CD14-positive monocyte (primary cell): ENCODE measurements at regions of chr1 and their contacts with region 1.

Region 1: DNA sequence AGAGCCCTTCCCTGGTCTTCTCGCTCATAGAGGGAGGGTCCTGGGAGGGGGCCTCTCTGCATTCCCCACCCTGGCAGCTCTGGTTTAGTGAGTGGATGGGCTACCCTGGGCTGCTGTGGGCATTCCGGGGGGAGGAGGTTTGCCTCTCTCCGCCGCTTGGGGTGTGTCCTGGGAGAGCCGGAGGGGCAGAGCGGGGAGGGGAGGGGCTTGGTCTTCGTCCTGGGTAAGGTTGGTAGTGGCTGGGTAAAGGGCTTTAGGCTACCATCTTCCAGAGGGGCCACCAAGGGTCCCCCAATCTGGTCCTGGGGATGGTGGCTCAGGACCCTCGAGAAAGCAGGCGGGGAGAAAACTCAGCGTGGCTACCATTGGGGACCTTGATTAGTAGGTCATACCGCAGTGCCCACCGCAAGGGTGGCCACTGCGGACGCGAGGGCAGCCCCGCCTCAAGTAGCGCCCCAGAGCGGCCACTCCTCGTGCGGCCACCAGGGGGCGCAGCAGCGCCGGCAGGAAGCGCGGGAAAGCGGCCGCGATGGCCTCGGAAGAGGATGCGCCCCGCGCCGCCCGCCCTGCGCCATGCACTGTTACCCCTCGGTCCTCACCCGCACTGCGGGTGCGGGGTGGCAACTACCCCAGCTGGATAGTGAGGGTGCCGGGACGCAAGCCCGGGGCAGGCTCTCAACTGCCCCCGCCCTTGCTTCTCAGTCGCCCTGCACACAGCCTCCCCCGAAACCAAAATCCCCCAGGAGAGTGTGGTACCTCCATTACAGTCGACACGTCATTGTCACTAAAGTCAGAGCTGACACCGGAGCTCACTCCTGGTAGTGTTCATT is 44.1 kb upstream of the SLC25A33 start:
- DNase-seq: peak; percentile 45 to 60 (median 49)
- H3K4me3 ChIP-seq: peak overlapping the region in 1 of 3 experiments; percentile 36
- H3K4me3 Mint-ChIP-seq: peak overlapping the region in 1 of 2 donors; percentile 57
- H3K27ac ChIP-seq: no peak overlapping the region
- H3K27ac Mint-ChIP-seq: no peak overlapping the region
- H3K4me1 ChIP-seq: peaks cover 9 to 10% of the 10 kb centered on the region in 2 donors
- H3K4me1 Mint-ChIP-seq: peaks cover 8% of the 10 kb centered on the region
- H3K27me3 ChIP-seq: peaks cover 0 to 10% of the 10 kb centered on the region in 2 donors
- H3K27me3 Mint-ChIP-seq: peaks cover 12 to 25% (median 18%) of the 10 kb centered on the region in 3 donors
- CTCF ChIP-seq: peak; percentile 99

Region 2: GRCh38 chr1:9110669-9111356 is 384.3 kb before region 1 on chr1:
- intact Hi-C with region 1: loop called in 1 of 2 experiments (anchors 5 kb)
- DNase-seq: peak; percentile 71 to 84 (median 72)
- H3K4me3 ChIP-seq: no peak overlapping the region
- H3K4me3 Mint-ChIP-seq: no peak overlapping the region
- H3K27ac ChIP-seq: no peak overlapping the region
- H3K27ac Mint-ChIP-seq: peak overlapping the region in 3 of 7 donors; percentile 23 to 59 (median 50)
- H3K4me1 ChIP-seq: no peaks in the 10 kb centered on the region
- H3K4me1 Mint-ChIP-seq: peaks cover 9% of the 10 kb centered on the region
- H3K27me3 ChIP-seq: no peaks in the 10 kb centered on the region
- H3K27me3 Mint-ChIP-seq: peaks cover 0 to 4% (median 0%) of the 10 kb centered on the region in 3 donors
- CTCF ChIP-seq: peak; percentile 95

Region 3: DNA sequence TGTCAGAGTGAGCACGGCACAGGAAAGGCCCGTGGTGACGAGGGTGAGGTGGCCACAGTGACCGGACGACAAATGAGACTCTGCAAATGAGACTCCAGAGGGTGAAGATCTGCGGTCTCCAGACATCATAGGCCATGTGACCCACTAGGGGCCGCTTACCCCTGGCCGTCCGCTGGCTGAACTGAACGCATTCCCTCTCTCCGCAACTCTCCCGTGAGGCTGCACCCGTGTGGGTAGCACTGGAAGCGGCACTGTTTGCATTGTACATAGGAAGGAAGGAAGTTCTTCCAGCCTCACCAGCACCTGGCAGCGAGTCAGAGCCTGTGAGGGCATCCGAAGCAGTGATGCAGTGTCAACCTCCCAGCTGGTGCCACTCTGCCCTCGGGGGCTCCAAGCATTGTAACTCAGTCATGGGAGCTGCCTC is 226.1 kb before region 1 on chr1:
- intact Hi-C with region 1: loop called (anchors 1 to 5 kb)
- DNase-seq: no peak
- H3K4me3 ChIP-seq: no peak overlapping the region
- H3K4me3 Mint-ChIP-seq: no peak overlapping the region
- H3K27ac ChIP-seq: no peak overlapping the region
- H3K27ac Mint-ChIP-seq: peak overlapping the region in 1 of 7 donors; percentile 36
- H3K4me1 ChIP-seq: no peaks in the 10 kb centered on the region
- H3K4me1 Mint-ChIP-seq: peaks cover 3% of the 10 kb centered on the region
- H3K27me3 ChIP-seq: no peaks in the 10 kb centered on the region
- H3K27me3 Mint-ChIP-seq: peaks cover 0 to 1% (median 1%) of the 10 kb centered on the region in 3 donors
- CTCF ChIP-seq: no peak

Region 4: GRCh38 chr1:9292361-9293240 is 202.5 kb before region 1 on chr1 and contains the start of gene SPSB1:
- intact Hi-C with region 1: loop called in 1 of 2 experiments (anchors 1 kb)
- DNase-seq: peak; percentile 52 to 62 (median 62)
- H3K4me3 ChIP-seq: peak within 1 kb of the TSS; percentile 45 to 75 (median 46)
- H3K4me3 Mint-ChIP-seq: peak within 1 kb of the TSS; percentile 64 to 73
- H3K27ac ChIP-seq: no peak within 1 kb of the TSS
- H3K27ac Mint-ChIP-seq: peak within 1 kb of the TSS in 2 of 7 donors; percentile 36 to 38
- H3K4me1 ChIP-seq: peaks cover 22 to 32% of the 10 kb centered on the region in 2 donors
- H3K4me1 Mint-ChIP-seq: peaks cover 20% of the 10 kb centered on the region
- H3K27me3 ChIP-seq: peaks cover 16 to 47% of the 10 kb centered on the region in 2 donors
- H3K27me3 Mint-ChIP-seq: peaks cover 19 to 32% (median 27%) of the 10 kb centered on the region in 3 donors
- CTCF ChIP-seq: no peak
- polyA plus RNA-seq, gene SPSB1: 0.15 to 1.2 (median 0.29) TPM

Region 5: DNA sequence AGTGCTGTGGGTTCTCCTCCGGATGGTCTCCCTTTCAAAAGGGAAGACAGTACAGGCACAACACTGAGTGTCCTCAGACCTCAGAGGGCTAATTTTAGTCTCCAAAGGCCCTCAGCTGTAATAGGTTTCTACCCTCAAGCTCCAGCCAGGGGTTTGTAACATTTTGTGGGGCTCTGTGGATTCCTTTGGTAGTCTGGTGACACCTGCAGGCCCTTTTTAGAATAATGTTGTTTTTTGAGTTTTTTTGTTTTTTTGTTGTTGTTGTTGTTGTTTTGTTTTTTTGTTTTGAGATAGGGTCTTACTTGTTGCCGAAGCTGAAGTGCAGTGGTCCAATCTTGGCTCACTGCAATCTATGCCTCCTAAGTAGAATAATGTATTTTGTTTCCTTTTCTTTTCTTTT is 78.6 kb after region 1 on chr1:
- intact Hi-C with region 1: loop called (anchors 1 to 2 kb)
- DNase-seq: no peak
- H3K4me3 ChIP-seq: no peak overlapping the region
- H3K4me3 Mint-ChIP-seq: no peak overlapping the region
- H3K27ac ChIP-seq: no peak overlapping the region
- H3K27ac Mint-ChIP-seq: peak overlapping the region in 1 of 7 donors; percentile 48
- H3K4me1 ChIP-seq: no peaks in the 10 kb centered on the region
- H3K4me1 Mint-ChIP-seq: peaks cover 5% of the 10 kb centered on the region
- H3K27me3 ChIP-seq: no peaks in the 10 kb centered on the region
- H3K27me3 Mint-ChIP-seq: peaks cover 0 to 2% (median 0%) of the 10 kb centered on the region in 3 donors
- CTCF ChIP-seq: peak; percentile 50

Region 6: DNA sequence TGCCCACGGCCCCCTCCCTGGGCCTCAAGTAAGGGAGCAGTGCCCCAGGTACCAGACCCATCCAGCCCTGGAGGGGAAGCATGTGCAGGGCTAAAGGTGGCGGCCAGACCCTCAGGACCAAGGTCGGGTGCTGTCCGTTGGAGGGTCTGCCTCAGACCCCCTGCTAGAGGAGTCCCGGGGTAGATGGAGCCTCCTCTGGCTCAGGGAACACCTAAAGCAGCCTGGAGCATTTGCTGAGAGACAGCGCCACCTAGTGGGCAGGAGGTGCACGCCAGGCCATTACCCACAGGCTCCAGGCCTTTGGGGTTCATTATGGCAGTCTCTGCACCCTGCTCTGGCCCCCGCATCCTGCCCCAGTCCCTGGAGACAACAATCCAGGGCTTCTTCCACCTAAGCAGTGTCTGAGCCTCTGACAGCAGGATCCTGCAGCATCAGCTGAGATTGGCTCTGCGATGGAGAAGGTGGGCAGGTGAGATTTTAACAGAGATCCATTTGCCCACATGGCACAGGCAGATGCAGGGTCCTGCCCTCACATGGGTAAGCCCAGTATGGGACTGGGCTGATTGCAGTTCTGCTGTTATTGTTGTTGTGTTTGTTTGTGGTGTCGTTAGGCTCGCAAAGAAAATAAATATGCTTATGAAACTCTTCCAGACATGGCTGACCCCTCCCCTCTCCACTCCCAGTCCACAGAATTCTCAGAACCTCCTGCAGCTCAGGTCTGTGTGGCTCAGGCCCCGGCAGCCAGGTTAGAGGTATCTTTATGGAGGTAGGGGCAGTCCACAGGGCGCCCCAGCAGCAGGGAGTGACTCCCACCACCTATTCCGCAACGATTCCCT is 372.5 kb after region 1 on chr1:
- intact Hi-C with region 1: loop called in 1 of 2 experiments (anchors 10 kb)
- DNase-seq: peak; percentile 61 to 74 (median 70)
- H3K4me3 ChIP-seq: no peak overlapping the region
- H3K4me3 Mint-ChIP-seq: no peak overlapping the region
- H3K27ac ChIP-seq: no peak overlapping the region
- H3K27ac Mint-ChIP-seq: peak overlapping the region in 2 of 7 donors; percentile 20 to 63
- H3K4me1 ChIP-seq: no peaks in the 10 kb centered on the region
- H3K4me1 Mint-ChIP-seq: no peaks in the 10 kb centered on the region
- H3K27me3 ChIP-seq: no peaks in the 10 kb centered on the region
- H3K27me3 Mint-ChIP-seq: peaks cover 0 to 3% (median 0%) of the 10 kb centered on the region in 3 donors
- CTCF ChIP-seq: peak; percentile 98